Dorsolateral prefrontal cortex (tissue), 120 donors: ENCODE measurements at regions of chr7 and their contacts with region 1.

Region 1: DNA sequence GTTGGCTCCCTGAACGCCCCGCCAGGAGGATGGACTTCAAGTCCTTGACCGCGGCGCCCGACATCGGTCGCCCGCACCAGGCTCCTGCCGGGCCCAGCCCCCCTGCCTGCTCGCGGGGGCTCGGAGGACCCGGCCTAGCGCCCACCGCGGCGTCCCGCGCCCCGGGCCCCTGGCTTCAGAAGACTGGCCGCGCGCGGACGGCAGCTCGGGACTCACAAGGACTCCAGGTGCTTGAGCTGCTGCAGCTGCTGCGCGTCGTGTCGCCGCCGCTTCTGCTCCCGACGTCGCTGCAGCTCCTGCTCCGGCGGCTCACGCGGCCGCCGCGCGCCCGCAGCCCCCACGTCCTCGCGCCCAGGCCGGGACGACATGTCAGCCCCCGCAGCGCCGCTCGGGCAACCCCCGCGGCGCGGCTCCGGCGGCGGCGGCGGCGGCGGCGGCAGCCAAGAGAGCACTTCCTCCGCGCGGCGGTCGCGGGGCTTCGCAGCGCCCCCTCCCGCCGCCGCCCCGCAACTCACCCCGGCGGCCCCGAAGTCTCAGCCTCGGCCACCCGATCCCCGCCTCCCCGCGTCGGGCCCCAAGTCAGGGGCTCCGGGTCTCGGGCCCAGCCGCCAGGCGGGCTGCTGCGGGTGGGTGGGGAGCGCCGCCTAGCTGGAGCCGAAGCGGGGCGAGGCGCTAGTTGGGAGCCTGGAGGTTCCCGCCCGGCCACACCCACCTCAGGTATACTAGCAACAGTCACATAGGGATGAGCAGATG is at the start of gene RP9:
- DNase-seq: peak in 9 of 10 donors; percentile 25 to 82 (median 53)
- H3K4me3 ChIP-seq: peak within 1 kb of the TSS; percentile 67 to 99 (median 90)
- H3K27ac ChIP-seq: peak within 1 kb of the TSS in 56 of 59 donors; percentile 11 to 93 (median 78)
- H3K27me3 ChIP-seq: no peaks in the 10 kb centered on the region
- CTCF ChIP-seq: peak in 54 of 56 donors; percentile 31 to 84 (median 58)
- total RNA-seq, gene RP9: 5.9 to 25.1 (median 11.4) TPM

Region 2: GRCh38 chr7:32694182-32694581 is 415.0 kb before region 1 on chr7:
- intact Hi-C with region 1: loop called in 1 of 2 experiments (anchors 5 kb)
- DNase-seq: no peak
- H3K4me3 ChIP-seq: no peak overlapping the region
- H3K27ac ChIP-seq: no peak overlapping the region
- H3K27me3 ChIP-seq: no peaks in the 10 kb centered on the region
- CTCF ChIP-seq: no peak

Region 3: DNA sequence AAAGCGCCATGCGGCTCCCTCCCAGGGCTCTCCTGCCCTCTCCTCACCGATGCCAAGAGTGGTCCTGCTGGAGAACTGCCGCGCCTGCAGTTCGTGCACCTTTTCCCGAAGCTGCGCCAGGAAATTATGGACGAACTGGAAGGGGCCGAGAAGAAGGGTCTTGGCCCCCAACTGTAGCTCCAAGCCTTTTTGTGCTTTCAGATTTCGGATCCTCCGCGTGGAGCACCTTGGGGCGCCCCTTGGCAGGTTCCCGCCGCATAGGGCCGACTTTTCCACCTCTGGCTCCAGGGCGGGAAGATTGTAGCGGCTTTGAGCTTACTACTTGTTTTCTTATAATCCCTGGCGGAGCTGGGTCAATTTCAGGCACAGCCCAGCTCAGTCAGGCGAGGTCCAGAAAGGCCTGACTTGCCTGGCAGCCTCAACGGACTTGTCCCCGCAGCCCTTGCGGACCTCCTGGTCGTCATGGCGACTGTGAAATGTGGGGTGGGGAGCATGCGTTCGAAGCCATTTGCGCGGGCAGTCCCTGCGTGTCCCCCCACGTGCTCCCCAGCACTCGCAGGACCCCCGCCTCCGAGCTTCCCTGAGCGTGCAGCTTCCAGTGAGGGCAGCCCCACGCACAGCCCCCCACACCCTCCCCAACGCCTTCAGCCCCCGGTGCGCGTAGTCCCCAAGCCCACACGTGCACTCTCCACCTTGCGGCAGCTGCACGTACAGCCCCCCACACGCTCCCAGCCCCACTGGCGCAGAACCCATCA is 347.6 kb before region 1 on chr7:
- intact Hi-C with region 1: loop called in 1 of 2 experiments (anchors 10 kb)
- DNase-seq: peak in 1 of 10 donors; percentile 48
- H3K4me3 ChIP-seq: peak overlapping the region in 57 of 59 donors; percentile 8 to 67 (median 49)
- H3K27ac ChIP-seq: peak overlapping the region in 1 of 59 donors; percentile 28
- H3K27me3 ChIP-seq: no peaks in the 10 kb centered on the region
- CTCF ChIP-seq: no peak

Region 4: DNA sequence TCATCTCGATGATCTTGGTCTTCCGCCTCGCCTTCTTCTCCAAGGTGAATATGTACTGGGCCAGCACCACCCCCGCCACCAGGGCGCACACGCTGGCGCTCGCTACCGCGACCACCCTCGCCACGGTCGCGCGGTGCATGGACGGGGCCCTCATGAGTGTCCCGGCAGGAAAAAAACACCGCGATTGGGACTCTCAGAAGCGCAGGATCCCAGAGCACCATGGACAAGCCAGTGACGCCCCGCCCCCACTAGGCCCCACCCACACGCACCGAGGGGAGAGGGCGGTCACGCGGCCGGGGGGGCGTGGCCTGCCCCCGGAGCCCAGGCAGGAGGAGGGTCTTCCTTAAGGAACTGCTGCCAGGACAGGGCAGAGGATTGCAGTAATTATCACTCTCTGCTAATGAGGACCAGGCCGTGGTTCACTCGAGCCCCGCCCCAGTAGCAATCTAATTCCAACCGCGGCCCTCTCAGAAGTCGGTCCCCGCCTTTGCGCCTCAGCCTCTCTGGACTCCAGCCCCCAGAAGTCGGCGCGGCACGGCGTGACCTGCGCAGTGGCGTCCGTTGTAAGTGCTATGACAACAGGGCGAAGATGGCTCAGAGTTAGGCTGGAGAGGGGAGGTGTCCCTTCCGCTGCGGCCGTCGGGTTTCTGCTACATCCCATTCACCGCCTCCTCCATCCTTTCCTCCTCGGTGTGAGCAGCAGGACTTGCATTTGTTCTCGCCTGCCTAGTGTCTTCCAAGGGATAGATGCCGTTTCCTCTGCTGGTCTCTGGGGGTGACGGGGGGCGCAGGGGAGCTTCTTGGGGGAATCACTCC is 20.0 kb after region 1 on chr7 and contains the start of gene BBS9:
- intact Hi-C with region 1: loop called (anchors 2 kb)
- DNase-seq: peak; percentile 92 to 96 (median 94)
- H3K4me3 ChIP-seq: peak within 1 kb of the TSS; percentile 56 to 96 (median 80)
- H3K27ac ChIP-seq: peak within 1 kb of the TSS; percentile 65 to 97 (median 92)
- H3K27me3 ChIP-seq: no peaks in the 10 kb centered on the region
- CTCF ChIP-seq: peak in 25 of 56 donors; percentile 10 to 46 (median 20)
- total RNA-seq, gene BBS9: 23.0 to 66.1 (median 39.1) TPM

Region 5: DNA sequence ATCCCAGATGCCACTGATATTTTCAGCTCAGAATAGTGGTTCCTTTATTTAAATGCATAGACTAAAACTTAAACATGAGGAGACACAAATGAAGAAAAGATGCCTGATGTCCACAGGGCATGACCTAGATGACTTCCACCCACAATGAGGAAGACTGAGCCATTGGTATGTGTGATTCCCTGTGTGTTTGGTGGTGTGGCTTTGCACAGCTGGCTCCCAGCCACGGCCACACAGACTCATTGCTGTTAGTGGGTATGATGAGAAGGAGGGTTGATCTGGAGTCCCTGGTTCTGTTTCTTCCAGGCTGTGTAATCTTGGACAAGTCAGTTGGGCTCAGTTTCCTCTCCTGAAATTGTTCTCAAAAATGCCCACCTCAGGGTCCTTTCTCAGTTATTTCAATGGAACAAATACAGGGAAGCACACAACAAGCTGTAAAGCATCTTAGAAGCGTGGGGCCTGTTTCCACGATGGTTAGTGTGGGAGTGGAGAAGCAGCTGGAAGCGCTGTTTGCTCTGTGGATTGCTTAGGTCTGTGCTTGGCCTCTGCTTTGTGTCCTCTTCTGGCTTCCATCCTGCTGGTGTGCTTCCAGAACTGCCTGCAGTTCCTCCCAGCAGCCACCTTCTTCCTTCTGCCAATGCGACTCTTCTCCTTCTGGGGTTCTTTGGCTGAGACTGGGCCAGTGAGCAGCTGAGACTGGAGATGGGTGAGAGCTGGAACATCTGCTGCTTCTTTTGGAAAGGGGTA is 1099.9 kb after region 1 on chr7:
- intact Hi-C with region 1: no loop called
- DNase-seq: peak in 8 of 10 donors; percentile 20 to 62 (median 50)
- H3K4me3 ChIP-seq: no peak overlapping the region
- H3K27ac ChIP-seq: peak overlapping the region in 18 of 59 donors; percentile 10 to 67 (median 34)
- H3K27me3 ChIP-seq: no peaks in the 10 kb centered on the region
- CTCF ChIP-seq: no peak